ENCODE measurements at regions of chr12 and their contacts with region 1.

Region 1: GRCh38 chr12:45543906-45544315 is 185.6 kb upstream of the ARID2 start:
- DNase-seq: peak; percentile 5 to 82 (median 35)
- ATAC-seq: peak; percentile 89
- H3K4me3 ChIP-seq: no peak overlapping the region
- H3K4me3 Mint-ChIP-seq: no peak overlapping the region
- H3K27ac ChIP-seq: no peak overlapping the region
- H3K27ac Mint-ChIP-seq: no peak overlapping the region
- H3K4me1 ChIP-seq: no peaks in the 10 kb centered on the region
- H3K4me1 Mint-ChIP-seq: peaks cover 2% of the 10 kb centered on the region
- H3K27me3 ChIP-seq: no peaks in the 10 kb centered on the region
- H3K27me3 Mint-ChIP-seq: no peaks in the 10 kb centered on the region
- CTCF ChIP-seq: peak; percentile 75

Region 2: GRCh38 chr12:45557016-45557415 is 13.1 kb after region 1 on chr12:
- CTCF ChIA-PET with region 1: interaction called, 13 read pairs
- POLR2A ChIA-PET with region 1: no interaction called
- intact Hi-C with region 1: no loop called
- DNase-seq: no peak
- ATAC-seq: no peak
- H3K4me3 ChIP-seq: no peak overlapping the region
- H3K4me3 Mint-ChIP-seq: no peak overlapping the region
- H3K27ac ChIP-seq: no peak overlapping the region
- H3K27ac Mint-ChIP-seq: no peak overlapping the region
- H3K4me1 ChIP-seq: no peaks in the 10 kb centered on the region
- H3K4me1 Mint-ChIP-seq: peaks cover 2% of the 10 kb centered on the region
- H3K27me3 ChIP-seq: no peaks in the 10 kb centered on the region
- H3K27me3 Mint-ChIP-seq: no peaks in the 10 kb centered on the region
- CTCF ChIP-seq: no peak

Region 3: DNA sequence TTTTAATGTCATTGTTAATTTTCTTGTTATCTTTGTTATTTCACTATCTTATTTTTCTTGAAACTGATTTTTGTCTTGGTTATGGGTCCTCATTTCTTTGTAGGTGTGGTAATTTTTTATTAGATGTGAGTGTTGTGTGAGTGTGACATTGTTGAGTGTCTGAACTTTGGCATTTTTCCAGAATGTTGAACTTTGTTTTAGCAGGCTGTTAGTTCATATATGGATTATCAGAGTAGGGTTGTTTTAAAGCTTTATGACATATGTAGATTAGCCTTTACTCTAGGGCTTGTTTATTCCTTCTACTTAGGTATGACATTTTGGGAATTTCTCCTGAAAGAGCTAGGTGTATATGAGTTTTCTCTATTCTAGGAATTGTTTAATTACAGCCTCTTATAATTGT is 289.5 kb after region 1 on chr12:
- CTCF ChIA-PET with region 1: no interaction called
- POLR2A ChIA-PET with region 1: no interaction called
- intact Hi-C with region 1: loop called in 1 of 2 experiments (anchors 10 kb)
- DNase-seq: no peak
- ATAC-seq: no peak
- H3K4me3 ChIP-seq: no peak overlapping the region
- H3K4me3 Mint-ChIP-seq: no peak overlapping the region
- H3K27ac ChIP-seq: no peak overlapping the region
- H3K27ac Mint-ChIP-seq: no peak overlapping the region
- H3K4me1 ChIP-seq: no peaks in the 10 kb centered on the region
- H3K4me1 Mint-ChIP-seq: peaks cover 7% of the 10 kb centered on the region
- H3K27me3 ChIP-seq: no peaks in the 10 kb centered on the region
- H3K27me3 Mint-ChIP-seq: no peaks in the 10 kb centered on the region
- CTCF ChIP-seq: no peak

Region 4: DNA sequence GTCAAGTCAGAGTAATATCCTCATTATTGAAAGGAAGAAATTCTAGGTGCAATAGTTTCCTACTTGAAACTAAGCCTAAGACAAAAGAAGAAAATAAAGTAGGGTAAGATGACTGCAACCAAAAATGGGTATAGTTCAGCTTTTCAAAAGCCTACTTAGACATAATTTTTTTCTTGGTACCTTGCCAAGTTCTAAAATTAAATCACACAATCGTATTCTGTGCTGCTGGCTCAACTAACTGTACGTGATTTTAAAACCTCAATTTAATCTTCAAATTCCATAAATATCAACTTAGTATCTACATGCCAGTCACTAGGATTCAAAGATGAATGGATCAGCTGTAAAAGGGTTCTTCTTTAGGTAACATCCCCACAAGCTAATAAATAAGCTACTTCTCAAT is 389.6 kb after region 1 on chr12:
- CTCF ChIA-PET with region 1: no interaction called
- POLR2A ChIA-PET with region 1: no interaction called
- intact Hi-C with region 1: loop called in 1 of 2 experiments (anchors 5 kb)
- DNase-seq: no peak
- ATAC-seq: no peak
- H3K4me3 ChIP-seq: no peak overlapping the region
- H3K4me3 Mint-ChIP-seq: no peak overlapping the region
- H3K27ac ChIP-seq: no peak overlapping the region
- H3K27ac Mint-ChIP-seq: no peak overlapping the region
- H3K4me1 ChIP-seq: no peaks in the 10 kb centered on the region
- H3K4me1 Mint-ChIP-seq: peaks cover 14% of the 10 kb centered on the region
- H3K27me3 ChIP-seq: no peaks in the 10 kb centered on the region
- H3K27me3 Mint-ChIP-seq: no peaks in the 10 kb centered on the region
- CTCF ChIP-seq: no peak